Sigmoid colon (tissue), 7 donors: ENCODE measurements at regions of chr5 and their contacts with region 1.

Region 1: DNA sequence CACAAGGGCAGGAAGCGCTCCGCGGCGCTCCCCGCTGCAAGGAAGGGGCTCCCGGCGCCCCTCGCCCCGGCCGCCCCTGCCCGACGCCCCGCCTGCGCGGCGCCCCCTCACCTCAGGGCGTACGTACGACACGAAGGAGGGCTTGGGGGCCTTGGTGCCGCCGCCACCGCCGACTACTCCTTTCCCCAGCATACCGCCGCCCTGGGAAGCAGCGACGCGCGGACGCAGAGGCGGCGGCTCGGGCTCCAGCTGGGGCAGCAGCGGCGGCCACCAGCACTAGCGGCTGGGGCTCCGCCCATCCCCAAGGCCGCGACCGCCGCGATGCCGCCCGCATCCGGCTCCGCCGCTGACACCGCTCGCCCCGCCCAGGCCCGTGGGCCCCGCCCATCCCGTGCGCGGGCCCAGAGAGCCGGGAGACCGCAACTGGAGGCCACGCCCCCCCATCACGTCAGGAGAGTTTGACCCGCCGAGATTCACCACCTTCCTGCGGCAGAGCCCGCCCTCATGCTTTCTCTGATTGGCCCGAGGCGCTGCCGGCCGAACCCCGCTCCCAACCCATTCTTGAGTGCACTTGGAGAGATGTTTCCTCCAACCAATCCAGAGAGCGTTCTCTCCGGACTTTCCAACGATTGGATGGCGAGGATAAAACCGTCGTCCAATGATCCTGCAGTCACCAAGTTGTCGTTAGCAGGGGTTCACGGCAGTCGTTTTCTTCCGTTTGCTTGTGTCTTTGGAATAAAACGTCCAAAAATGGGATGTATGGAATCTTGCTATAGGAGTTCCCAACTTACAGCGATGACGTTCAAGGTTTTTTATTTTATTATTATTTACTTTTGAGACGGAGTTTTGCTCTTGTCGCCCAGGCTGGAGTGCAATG is at the start of gene MTMR12:
- DNase-seq: peak; percentile 100
- H3K4me3 ChIP-seq: peak within 1 kb of the TSS; percentile 76 to 97 (median 94)
- H3K27ac ChIP-seq: peak within 1 kb of the TSS; percentile 97 to 100 (median 98)
- H3K4me1 ChIP-seq: peaks cover 0 to 47% (median 36%) of the 10 kb centered on the region in 4 donors
- H3K27me3 ChIP-seq: no peaks in the 10 kb centered on the region
- CTCF ChIP-seq: no peak
- EP300 ChIP-seq: no peak
- POLR2A ChIP-seq: peak; percentile 67 to 88
- total RNA-seq, gene MTMR12: 26.7 to 49.9 (median 36.0) TPM

Region 2: DNA sequence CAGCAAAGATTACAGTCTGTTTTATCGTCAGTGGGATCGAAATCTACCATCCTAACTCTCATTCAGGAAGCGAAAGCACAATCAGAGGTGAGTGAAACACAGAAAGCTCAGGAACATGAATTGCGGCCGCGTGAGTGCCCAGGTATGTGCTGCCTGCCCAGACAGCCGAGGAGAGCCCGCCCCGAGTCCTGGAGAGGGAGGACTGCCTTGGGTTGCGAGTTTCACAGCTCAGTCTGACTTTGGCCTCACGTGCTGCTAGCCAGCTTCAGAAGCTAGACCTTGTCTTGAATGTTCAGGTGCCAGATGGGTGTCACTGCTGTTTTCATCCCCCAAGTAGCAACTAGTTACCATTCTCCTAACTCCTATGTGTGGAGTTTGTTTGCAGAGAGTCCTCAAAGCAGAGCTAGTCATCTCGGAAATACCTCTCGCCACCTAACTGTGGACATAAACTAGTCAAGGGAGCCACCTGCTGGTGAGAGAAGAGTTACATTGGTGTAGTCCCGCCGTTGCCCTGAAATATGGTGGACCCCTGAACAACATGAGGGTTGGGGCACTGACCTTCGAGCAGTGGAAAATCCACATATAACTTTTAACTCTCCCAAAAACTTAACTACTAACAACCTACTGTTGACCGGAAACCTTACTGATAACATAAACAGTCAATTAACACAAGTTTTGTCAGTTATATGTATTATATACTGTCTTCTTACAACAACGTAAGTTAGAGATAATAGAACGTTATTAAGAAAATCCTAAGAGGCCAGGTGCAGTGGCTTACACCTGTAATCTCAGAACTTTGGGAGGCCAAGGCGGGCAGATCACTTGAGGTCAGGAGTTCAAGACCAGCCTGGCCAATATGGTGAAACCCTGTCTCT is 219.7 kb before region 1 on chr5:
- intact Hi-C with region 1: loop called (anchors 10 kb)
- DNase-seq: peak; percentile 83
- H3K4me3 ChIP-seq: no peak overlapping the region
- H3K27ac ChIP-seq: no peak overlapping the region
- H3K4me1 ChIP-seq: peaks cover 0 to 19% (median 17%) of the 10 kb centered on the region in 4 donors
- H3K27me3 ChIP-seq: no peaks in the 10 kb centered on the region
- CTCF ChIP-seq: peak; percentile 65 to 74 (median 66)
- EP300 ChIP-seq: no peak
- POLR2A ChIP-seq: no peak

Region 3: GRCh38 chr5:32174011-32174870 is 138.6 kb before region 1 on chr5 and contains the start of gene GOLPH3:
- intact Hi-C with region 1: loop called (anchors 2 kb)
- DNase-seq: peak; percentile 96
- H3K4me3 ChIP-seq: peak within 1 kb of the TSS; percentile 76 to 98 (median 92)
- H3K27ac ChIP-seq: peak within 1 kb of the TSS; percentile 99 to 100 (median 100)
- H3K4me1 ChIP-seq: peaks cover 0 to 47% (median 36%) of the 10 kb centered on the region in 4 donors
- H3K27me3 ChIP-seq: no peaks in the 10 kb centered on the region
- CTCF ChIP-seq: no peak
- EP300 ChIP-seq: peak in 2 of 4 donors; percentile 12 to 18
- POLR2A ChIP-seq: peak; percentile 94 to 95
- total RNA-seq, gene GOLPH3: 170 to 247 (median 192) TPM

Region 4: GRCh38 chr5:32232441-32233219 is 80.3 kb before region 1 on chr5:
- intact Hi-C with region 1: loop called (anchors 2 kb)
- DNase-seq: peak; percentile 86
- H3K4me3 ChIP-seq: no peak overlapping the region
- H3K27ac ChIP-seq: peak overlapping the region; percentile 70 to 76 (median 74)
- H3K4me1 ChIP-seq: peaks cover 0 to 42% (median 32%) of the 10 kb centered on the region in 4 donors
- H3K27me3 ChIP-seq: no peaks in the 10 kb centered on the region
- CTCF ChIP-seq: peak; percentile 70 to 90 (median 76)
- EP300 ChIP-seq: no peak
- POLR2A ChIP-seq: no peak

Region 5: DNA sequence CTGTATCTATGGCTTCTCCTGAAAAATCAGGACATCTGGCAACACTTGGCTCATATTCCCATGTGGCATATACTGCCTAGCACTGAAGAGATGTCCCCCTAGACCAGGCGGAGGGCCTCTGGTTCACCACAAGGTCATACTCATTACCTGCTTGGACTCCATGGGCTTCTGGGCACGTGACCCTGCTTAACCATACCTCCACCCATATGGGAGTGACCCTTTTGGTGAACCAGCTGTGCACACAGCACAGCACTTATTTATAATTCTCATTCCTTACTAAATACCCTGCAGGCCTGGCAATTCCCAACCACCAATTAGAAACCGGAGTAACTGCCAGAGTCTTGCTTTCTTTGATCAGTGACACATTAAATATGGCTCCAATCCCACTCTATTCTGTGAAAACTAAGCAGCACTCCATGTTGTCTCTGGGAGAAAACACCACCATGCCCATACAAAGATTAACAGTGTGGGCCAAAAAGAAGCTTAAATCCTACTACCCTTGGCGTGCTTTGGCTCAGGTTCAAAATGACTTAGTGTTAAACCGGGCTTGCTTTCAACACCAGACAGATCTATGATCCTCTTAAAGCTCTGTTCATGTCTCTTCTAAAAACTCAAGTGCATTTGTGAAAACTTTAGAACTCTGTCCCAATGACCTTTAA is 57.9 kb before region 1 on chr5:
- intact Hi-C with region 1: loop called (anchors 5 kb)
- DNase-seq: no peak
- H3K4me3 ChIP-seq: no peak overlapping the region
- H3K27ac ChIP-seq: peak overlapping the region; percentile 50 to 70 (median 57)
- H3K4me1 ChIP-seq: peaks cover 0 to 24% (median 8%) of the 10 kb centered on the region in 4 donors
- H3K27me3 ChIP-seq: no peaks in the 10 kb centered on the region
- CTCF ChIP-seq: no peak
- EP300 ChIP-seq: no peak
- POLR2A ChIP-seq: no peak